ENCODE measurements at regions of chr3 and their contacts with region 1.

Region 1: DNA sequence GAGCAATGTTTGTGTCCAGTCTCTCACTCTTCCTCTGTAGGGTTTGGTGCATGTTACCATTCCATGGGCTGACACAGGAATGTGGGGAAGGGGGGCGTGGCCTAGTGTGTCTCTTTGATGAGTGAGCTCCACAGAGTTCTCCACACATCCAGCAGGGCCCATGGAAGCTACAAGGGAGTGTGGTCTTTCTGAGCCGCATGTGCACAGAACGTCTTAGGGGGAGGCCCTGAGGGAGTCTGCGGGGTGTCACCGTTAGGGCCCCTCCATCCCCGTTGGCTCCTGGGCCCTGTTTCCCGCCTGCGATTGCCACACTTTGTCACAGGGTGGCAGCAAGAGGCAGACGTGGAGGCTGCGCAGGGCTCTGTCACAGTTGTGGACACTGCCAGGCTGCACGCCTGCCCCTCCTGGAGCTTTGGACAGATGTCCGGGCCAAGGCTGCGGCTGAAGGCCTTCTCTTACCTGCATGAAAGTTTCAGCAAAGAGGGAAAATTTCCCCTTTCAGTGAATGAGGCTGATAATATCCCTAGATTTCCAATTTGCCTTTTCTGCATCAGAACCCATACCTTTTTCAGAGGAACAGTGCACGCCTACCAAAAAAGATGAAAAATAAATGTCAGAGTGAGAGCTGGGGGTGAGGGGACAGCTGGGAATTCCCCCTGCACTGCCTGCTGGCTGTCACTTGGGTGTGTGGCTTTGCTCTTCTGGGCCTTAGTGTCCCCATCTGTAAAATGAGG is 24.3 kb downstream of the CACNA2D3 start:
- DNase-seq: peak; percentile 83

Region 2: GRCh38 chr3:53845103-53845880 is 301.4 kb before region 1 on chr3:
- intact Hi-C with region 1: no loop called
- DNase-seq: peak; percentile 78

Region 3: DNA sequence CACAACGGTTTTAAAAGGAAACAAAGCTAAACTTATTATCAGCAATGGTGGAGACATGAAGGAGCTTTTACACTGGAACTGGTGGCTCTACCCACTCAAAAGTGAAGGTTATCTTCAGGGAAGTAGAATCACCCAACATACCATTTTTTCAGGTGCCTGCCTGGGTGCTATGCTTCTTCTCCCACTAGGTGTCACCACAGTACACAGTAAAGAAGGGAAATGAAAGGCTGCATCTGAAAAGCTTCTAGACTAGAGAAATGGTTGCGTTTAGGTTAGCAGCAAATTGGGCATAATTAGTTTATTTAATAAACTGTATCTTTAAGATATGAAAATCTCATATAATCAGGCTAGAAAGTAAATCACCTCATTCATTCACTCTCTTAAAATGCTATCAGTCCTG is 208.0 kb before region 1 on chr3:
- intact Hi-C with region 1: loop called (anchors 10 kb)
- DNase-seq: no peak

Region 4: GRCh38 chr3:54094926-54095325 is 51.7 kb before region 1 on chr3:
- intact Hi-C with region 1: no loop called
- DNase-seq: no peak

Region 5: DNA sequence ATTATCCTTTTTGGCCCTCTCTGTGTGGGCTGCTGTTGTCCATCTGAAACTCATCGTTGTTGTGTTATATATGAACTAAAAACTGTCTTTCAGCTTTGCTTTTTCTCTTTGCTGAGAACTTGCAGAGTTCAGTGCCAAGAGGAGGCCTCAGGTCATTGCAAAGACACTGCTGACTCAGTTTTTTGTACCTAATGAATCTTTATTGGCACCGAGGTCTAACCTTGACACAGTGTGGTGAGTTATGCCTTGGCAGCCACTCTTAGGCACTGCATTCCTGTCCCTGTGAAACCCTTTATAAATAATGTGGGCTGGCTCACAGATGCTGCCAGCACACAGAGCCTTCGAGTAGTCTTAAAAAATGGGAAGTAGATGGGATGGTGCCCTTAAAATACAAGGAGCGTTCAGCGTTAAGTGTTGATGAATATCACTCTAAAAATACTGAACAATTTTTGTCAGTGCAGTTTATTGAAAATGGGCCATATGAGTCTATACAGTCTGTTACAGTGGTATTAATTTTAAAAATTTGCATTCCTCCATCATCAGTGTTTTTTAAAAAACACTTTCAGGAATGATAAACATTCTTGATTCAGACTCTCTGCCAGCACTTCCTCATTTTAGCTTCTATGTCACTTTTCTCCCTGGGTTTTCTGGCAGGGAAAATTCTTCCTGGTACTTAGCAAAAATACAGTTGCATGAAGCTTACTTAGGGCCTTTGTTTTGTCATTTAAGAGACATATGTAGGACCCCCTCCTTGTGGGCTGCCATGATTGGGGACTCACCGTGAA is 209.8 kb after region 1 on chr3:
- intact Hi-C with region 1: loop called (anchors 5 kb)
- DNase-seq: no peak

Region 6: GRCh38 chr3:54374214-54374855 is 227.7 kb after region 1 on chr3:
- intact Hi-C with region 1: loop called (anchors 1 kb)
- DNase-seq: no peak

Region 7: DNA sequence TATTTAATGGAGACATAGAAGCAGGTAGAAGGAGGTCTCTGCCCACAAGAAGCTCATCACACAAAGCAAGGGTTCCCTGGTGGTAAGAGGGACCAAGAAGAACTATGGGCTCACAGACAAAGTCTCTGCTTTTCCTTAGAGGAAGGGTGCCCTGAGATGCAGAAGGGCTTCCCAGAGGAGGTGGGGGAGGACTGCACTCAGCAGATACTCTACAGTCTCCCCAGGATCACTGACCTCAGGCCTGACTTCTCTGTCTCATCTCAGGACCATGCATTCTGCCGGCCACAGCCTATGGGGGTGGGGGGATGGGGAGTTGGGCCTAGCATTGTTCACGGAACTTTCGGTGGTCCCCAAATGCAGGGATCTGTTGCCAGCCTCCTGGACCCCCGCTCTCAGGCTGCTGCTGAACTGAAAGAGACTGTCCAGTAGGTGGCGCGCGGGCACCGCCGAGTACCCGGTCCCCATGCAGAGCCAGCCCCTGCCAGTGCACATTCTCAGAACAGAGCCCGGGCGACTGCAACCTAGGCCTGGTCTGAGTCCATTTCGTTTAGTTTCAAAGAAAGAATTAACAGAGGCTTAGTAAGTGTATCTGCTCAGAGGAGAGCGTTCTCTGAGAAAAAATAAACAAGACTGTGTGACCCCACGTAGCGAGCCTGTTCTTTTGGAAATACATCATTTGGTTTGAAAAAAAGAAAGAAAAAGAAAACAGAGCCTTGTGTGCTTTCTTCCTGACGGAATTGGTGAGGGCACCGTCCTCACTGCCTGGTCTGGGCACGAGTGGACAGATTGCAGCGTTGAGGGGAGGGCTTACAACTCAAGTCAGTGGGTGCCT is 707.1 kb after region 1 on chr3:
- intact Hi-C with region 1: no loop called
- DNase-seq: peak; percentile 81